Right lobe of liver (tissue), 6 donors: ENCODE measurements at regions of chr21 and their contacts with region 1.

Region 1: DNA sequence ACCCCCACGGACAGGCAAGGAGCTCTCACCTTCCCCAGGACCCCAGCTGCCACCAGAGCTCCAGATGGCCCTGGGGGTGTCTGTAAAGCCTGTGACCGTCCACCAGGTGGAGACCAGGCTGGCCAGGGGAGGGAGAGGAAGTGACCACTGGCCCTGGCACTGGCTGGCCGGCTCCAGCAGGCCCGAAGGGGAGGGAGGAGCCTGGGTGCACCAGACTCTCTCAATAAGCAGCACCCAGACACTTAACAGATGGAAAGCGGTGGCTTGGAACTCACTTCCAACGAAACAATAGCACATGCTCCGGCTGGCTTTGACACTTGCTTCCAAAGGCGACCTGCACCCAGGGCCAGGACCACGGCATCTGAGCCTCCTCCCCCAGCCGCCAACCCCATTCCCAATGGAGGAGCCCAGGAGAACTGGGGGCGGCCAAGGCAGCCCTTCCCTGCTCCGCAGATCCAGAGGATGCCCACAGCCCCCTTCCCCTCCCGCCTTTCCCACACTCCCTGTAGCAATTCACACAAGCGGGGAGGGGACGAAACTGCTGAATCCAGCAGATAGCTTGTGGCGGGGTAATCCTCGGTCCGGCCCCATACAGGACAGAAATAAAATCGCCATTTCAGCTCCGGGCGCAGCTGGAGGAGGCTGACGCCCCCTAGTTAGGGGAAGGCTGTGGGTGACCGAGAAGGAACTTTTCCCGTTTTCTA is 742 bp upstream of the PDE9A start:
- DNase-seq: peak; percentile 83 to 85 (median 84)
- ATAC-seq: peak; percentile 91 to 97 (median 96)
- H3K4me3 ChIP-seq: peak overlapping the region; percentile 30 to 40 (median 36)
- H3K27ac ChIP-seq: peak overlapping the region in 1 of 3 donors; percentile 34
- H3K4me1 ChIP-seq: peaks cover 0 to 12% (median 2%) of the 10 kb centered on the region in 4 donors
- H3K27me3 ChIP-seq: no peaks in the 10 kb centered on the region
- CTCF ChIP-seq: peak; percentile 56 to 87 (median 64)
- POLR2A ChIP-seq: peak; percentile 30

Region 2: DNA sequence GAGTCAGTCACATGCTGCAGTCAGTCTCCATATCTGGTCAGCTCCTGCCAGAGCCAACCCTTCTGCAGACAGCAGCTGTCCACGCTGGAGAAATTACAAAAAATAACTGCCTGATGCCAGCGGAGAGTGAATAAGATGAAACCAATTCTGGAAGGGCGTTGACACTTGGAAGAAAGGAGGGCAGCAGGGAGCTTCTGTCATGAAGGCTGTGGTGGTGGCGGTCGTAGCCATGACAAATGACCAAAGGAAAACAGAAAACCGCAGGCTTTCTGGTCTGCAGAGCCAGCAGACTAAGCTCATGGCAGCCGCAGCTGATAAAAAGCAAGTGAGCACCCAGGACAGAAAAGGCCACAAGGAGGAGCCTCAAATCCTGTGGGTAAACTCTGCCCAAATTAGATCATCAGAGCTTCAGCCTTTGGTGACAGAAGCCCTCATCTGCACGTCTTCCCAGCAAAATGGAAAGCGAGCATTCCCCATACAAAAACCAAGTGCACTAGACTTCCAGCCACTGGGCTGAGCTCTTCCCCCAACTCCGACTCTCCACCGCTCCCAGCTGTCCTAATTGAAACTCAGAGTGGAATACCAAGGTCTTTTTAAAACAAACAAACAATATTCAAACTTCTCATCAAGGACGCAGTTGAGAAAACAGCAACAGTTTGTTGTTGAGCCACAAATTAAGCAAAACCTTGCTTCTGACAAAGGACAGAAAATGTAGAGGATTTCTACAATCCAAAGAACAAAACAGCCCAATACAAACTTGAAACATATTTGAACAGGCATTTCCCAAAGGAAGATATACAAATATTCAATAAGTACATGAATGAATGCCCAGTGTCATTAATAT is 185.3 kb before region 1 on chr21:
- intact Hi-C with region 1: no loop called
- DNase-seq: peak in 2 of 3 donors; percentile 27 to 56
- ATAC-seq: peak; percentile 28 to 54 (median 46)
- H3K4me3 ChIP-seq: no peak overlapping the region
- H3K27ac ChIP-seq: no peak overlapping the region
- H3K4me1 ChIP-seq: peaks cover 0 to 47% (median 16%) of the 10 kb centered on the region in 4 donors
- H3K27me3 ChIP-seq: no peaks in the 10 kb centered on the region
- CTCF ChIP-seq: peak; percentile 35 to 44 (median 40)
- POLR2A ChIP-seq: no peak

Region 3: DNA sequence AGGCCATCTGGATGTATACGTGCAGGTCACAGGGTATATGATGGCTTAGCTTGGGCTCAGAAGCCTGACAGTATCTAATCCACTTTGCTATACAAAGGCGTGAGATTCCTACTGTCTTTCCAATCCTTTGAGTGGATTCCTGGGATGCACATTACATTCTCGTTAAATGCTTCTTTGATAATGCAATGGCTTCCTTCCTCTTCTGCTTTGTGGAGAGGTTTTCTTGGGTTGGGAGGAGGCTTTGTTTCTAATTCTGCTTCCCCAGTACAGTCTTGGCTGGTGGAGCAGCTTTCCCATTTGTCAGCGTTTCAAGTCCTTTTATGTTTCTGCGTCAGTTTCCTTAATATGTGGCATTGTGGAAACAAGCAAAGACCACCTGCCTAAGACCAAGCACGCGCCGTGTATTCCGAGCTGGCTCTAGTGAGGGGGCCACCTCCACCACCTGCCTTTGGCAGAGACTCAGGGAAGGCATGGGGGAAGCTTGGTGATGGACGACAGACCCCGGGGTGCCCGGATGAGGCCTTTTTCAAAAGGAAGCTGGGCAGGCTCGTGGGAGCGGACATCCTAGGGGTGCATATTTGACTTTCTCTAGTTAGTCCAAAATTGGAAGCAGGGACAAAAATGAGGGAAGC is 153.9 kb after region 1 on chr21:
- intact Hi-C with region 1: loop called (anchors 10 kb)
- DNase-seq: no peak
- ATAC-seq: no peak
- H3K4me3 ChIP-seq: no peak overlapping the region
- H3K27ac ChIP-seq: no peak overlapping the region
- H3K4me1 ChIP-seq: no peaks in the 10 kb centered on the region
- H3K27me3 ChIP-seq: no peaks in the 10 kb centered on the region
- CTCF ChIP-seq: no peak
- POLR2A ChIP-seq: no peak

Region 4: DNA sequence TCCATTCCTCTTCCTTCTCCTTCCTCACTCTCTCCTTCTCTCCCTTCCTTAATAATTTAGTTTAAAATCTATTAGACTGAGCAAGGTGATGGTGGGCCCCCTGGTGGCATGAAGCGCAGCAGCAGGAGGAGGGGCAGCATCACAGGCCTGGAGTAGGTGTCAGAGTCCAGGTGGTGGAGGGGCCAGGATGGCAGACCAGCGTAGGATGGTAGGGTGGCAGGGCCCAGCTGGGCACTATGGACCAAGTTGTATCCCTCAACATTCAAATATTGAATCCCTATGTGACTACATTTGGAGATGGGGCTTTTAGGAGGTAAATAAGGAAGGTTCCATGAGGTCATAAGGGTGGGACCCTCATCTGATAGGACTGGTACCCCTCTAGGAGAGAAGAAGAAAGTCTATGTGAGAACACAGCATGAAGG is 165.7 kb after region 1 on chr21:
- intact Hi-C with region 1: loop called in 1 of 2 experiments (anchors 10 kb)
- DNase-seq: peak; percentile 72 to 78 (median 74)
- ATAC-seq: peak; percentile 96 to 99 (median 98)
- H3K4me3 ChIP-seq: no peak overlapping the region
- H3K27ac ChIP-seq: no peak overlapping the region
- H3K4me1 ChIP-seq: no peaks in the 10 kb centered on the region
- H3K27me3 ChIP-seq: no peaks in the 10 kb centered on the region
- CTCF ChIP-seq: peak; percentile 94 to 98 (median 96)
- POLR2A ChIP-seq: no peak

Region 5: GRCh38 chr21:42833439-42833815 is 180.7 kb after region 1 on chr21:
- intact Hi-C with region 1: loop called in 1 of 2 experiments (anchors 10 kb)
- DNase-seq: peak in 1 of 3 donors; percentile 46
- ATAC-seq: peak; percentile 28 to 43 (median 36)
- H3K4me3 ChIP-seq: no peak overlapping the region
- H3K27ac ChIP-seq: no peak overlapping the region
- H3K4me1 ChIP-seq: peaks cover 0 to 8% (median 2%) of the 10 kb centered on the region in 4 donors
- H3K27me3 ChIP-seq: no peaks in the 10 kb centered on the region
- CTCF ChIP-seq: peak in 2 of 4 donors; percentile 22 to 32
- POLR2A ChIP-seq: no peak